HEK293 (cell line): ENCODE measurements at regions of chr19 and their contacts with region 1.

Region 1: GRCh38 chr19:35748106-35749020 is at the start of gene LIN37:
- H3K4me3 ChIP-seq: peak within 1 kb of the TSS; percentile 63
- H3K27ac ChIP-seq: peak within 1 kb of the TSS; percentile 68
- H3K4me1 ChIP-seq: peaks cover 30% of the 10 kb centered on the region
- CTCF ChIP-seq: no peak

Region 2: DNA sequence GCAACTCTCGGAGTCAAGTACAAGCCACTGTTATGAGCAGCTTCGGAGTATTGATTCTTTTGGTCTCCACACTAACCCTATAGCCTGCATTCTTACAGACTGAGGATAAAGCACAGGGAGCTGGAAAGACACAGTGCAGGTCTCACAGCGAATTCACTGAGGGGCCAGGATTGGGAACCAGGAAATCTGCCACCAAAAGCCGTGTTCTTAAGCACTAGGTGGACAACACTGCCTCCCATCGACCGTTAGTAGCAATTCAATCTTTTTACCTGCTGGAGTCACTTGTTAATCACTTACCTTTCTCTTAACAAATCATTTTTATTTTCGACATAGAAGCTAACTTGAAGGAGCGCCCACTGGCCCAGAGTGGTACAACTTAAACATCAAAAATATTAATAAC is 156.1 kb before region 1 on chr19:
- CTCF ChIA-PET with region 1: no interaction called
- POLR2A ChIA-PET with region 1: no interaction called
- H3K4me3 ChIP-seq: no peak overlapping the region
- H3K27ac ChIP-seq: no peak overlapping the region
- H3K4me1 ChIP-seq: 0 out of 2 replicates have a peak, but pooled peaks cover 2% of the 10 kb centered on the region
- CTCF ChIP-seq: 0 out of 2 replicates have a peak, but pooled peaks have one; percentile 34

Region 3: GRCh38 chr19:35693830-35694599 is 54.3 kb before region 1 on chr19:
- CTCF ChIA-PET with region 1: interaction called, 37 read pairs
- POLR2A ChIA-PET with region 1: interaction called, 3 read pairs
- H3K4me3 ChIP-seq: no peak overlapping the region
- H3K27ac ChIP-seq: no peak overlapping the region
- H3K4me1 ChIP-seq: no peaks in the 10 kb centered on the region
- CTCF ChIP-seq: peak; percentile 100

Region 4: DNA sequence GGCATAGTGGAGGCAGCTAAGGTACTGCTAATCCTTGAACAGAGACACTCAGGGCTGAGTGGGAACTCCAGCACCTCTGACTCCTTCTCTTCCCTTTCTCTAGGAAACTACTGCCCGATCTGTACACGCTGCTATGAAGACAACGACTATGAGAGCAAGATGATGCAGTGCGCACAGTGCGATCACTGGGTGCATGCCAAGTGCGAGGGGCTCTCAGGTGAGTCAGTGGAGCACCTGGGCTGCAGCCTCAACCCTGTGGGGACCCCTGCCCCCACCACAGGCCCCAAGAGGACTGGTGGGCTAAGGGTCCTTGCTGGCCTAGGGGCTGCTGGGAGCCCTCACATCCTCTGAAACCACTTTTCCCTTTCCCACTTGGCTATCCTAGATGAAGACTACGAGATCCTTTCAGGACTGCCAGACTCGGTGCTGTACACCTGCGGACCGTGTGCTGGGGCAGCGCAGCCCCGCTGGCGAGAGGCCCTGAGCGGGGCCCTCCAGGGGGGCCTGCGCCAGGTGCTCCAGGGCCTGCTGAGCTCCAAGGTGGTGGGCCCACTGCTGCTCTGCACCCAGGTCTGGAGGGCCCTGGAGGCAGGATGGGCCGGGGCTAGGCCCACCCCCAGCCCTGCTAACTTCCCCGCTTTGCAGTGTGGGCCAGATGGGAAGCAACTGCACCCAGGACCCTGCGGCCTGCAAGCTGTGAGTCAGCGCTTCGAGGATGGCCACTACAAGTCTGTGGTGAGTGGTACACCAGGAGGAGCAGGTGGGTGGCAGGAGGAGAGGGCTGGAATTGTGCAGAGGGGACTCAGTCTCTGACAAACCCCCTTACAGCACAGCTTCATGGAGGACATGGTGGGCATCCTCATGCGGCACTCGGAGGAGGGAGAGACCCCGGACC is 21.1 kb before region 1 on chr19:
- CTCF ChIA-PET with region 1: interaction called, 3 read pairs
- POLR2A ChIA-PET with region 1: interaction called, 12 read pairs
- H3K4me3 ChIP-seq: no peak overlapping the region
- H3K27ac ChIP-seq: peak overlapping the region; percentile 31; the same call in 1 of the 2 replicates
- H3K4me1 ChIP-seq: no peaks in the 10 kb centered on the region
- CTCF ChIP-seq: no peak

Region 5: GRCh38 chr19:35775298-35776110 is 27.1 kb after region 1 on chr19 and contains the start of gene ARHGAP33:
- CTCF ChIA-PET with region 1: interaction called, 3 read pairs
- POLR2A ChIA-PET with region 1: interaction called, 20 read pairs
- H3K4me3 ChIP-seq: peak within 1 kb of the TSS; percentile 59
- H3K27ac ChIP-seq: peak within 1 kb of the TSS; percentile 48; the same call in 1 of the 2 replicates
- H3K4me1 ChIP-seq: peaks cover 24% of the 10 kb centered on the region
- CTCF ChIP-seq: no peak

Region 6: DNA sequence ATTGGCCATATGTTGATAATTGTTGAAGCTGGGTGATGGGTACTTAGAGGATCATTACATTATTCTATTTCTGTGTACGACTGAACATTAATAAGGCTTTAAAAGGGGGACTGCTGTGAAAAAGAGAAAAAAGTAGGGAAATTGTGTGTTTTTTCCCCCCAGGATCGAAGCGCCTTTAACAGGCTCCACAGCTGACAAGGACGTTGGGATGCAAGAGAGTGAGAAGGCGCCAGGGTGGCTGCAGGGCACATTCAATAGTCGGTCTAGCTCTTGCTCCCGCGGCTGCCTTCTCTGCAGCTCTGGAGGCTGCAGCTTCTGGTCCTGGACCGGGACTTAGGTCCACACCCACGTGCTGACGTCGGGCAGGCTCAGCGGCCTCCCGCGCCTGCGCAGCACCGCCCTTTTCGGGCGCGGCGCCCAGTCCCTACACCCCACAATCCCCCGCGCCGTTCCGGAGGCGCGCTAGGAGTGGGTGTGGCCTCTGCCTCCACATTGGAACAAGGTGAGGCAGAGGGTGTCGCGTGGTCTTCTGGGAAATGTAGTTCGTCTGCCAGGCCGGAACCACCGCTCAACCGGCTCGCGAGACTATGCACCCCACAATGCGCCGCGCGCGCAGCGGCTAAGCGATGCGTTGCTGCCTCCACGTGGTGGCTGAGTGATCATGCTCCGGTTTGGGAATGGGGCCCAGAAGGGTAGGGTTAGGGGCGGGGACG is 183.0 kb after region 1 on chr19:
- CTCF ChIA-PET with region 1: interaction called, 5 read pairs
- POLR2A ChIA-PET with region 1: interaction called, 13 read pairs
- H3K4me3 ChIP-seq: peak overlapping the region; percentile 12
- H3K27ac ChIP-seq: peak overlapping the region; percentile 33; the same call in 1 of the 2 replicates
- H3K4me1 ChIP-seq: peaks cover 11% of the 10 kb centered on the region
- CTCF ChIP-seq: peak; percentile 100